ENCODE measurements at regions of chr14 and their contacts with region 1.

Region 1: GRCh38 chr14:92793709-92794546 is at the start of gene GOLGA5:
- H3K4me3 Mint-ChIP-seq: peak within 1 kb of the TSS; percentile 91
- H3K27ac Mint-ChIP-seq: peak within 1 kb of the TSS; percentile 98
- H3K4me1 Mint-ChIP-seq: peaks cover 54% of the 10 kb centered on the region
- H3K27me3 Mint-ChIP-seq: no peaks in the 10 kb centered on the region

Region 2: DNA sequence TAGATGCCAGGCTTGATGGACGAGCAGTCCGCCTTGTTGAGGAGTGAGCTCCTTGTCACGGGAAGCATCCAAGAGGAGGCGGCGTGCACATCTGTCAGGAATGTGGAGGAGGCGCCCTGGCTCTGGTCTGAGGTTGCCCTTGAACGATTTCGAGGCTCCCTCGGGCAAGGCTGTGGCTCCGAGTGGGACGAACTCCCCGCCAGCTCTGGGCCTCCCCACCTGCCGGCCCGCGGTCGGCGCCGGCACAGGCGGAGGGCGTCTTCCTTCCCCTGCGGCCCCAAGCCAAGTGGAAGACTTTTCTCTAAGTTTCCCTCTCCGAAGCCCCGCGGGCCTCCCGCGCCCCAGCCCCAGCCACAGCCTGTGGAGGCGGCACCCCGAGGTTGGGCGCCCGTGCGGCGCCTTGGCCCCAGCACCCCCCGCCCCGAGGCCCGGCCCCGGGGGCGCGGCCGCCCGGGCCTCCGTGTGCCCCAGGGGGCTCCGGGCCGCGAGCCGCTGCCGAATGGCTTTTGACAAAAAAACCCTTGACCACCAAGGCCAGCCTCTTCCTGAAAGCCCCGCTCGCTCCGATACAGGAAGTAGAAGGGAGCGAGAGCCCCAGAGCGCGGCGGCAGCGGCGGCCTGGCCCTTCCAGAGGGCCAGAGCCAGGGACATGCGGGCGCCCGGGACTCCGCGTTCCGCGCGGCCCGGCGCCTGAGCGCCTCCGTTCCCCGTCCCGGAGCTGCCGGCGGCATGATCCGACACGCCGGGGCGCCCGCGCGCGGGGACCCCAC is 280.5 kb before region 1 on chr14 and contains the start of gene RIN3:
- intact Hi-C with region 1: loop called (anchors 10 kb)
- H3K4me3 Mint-ChIP-seq: peak within 1 kb of the TSS; percentile 86
- H3K27ac Mint-ChIP-seq: peak within 1 kb of the TSS; percentile 94
- H3K4me1 Mint-ChIP-seq: peaks cover 67% of the 10 kb centered on the region
- H3K27me3 Mint-ChIP-seq: peaks cover 13% of the 10 kb centered on the region

Region 3: DNA sequence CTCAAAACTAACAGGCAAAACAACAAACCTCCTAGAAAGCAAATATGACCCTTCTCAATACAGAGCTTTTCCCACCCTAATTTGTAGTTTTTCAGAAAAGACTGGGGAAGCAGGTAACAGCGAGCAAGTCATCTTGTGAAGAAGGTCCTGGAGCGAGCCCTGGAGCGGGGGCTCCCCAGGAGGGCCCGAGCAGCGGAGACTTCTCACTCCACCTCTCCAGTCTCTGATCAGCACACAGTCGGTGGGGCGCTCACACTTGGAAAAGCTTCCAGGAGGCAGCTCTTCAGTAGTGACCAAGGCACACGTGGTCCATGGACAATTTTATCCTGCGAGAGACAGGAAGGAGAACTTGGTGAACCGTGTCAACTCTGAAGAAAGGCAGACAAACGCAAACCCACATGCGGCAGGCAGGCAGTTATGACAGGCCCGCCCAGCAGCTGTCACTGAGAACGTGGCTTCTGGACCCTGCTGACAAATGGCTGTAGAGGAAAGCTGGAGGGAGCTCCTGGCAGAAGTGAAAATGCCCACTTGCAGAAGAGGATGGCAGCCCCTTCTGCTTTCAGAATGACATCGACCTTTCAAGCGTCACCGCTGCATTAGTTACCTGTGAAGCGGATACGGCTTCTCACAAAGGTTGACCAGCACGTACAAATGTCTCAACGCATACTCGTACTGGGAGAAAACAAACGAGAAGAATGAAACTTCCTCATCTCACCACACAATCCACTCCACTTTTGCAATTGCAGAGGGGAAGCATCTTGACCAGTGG is 89.7 kb before region 1 on chr14:
- intact Hi-C with region 1: loop called (anchors 5 kb)
- H3K4me3 Mint-ChIP-seq: peak overlapping the region; percentile 56
- H3K27ac Mint-ChIP-seq: peak overlapping the region; percentile 91
- H3K4me1 Mint-ChIP-seq: peaks cover 73% of the 10 kb centered on the region
- H3K27me3 Mint-ChIP-seq: no peaks in the 10 kb centered on the region

Region 4: DNA sequence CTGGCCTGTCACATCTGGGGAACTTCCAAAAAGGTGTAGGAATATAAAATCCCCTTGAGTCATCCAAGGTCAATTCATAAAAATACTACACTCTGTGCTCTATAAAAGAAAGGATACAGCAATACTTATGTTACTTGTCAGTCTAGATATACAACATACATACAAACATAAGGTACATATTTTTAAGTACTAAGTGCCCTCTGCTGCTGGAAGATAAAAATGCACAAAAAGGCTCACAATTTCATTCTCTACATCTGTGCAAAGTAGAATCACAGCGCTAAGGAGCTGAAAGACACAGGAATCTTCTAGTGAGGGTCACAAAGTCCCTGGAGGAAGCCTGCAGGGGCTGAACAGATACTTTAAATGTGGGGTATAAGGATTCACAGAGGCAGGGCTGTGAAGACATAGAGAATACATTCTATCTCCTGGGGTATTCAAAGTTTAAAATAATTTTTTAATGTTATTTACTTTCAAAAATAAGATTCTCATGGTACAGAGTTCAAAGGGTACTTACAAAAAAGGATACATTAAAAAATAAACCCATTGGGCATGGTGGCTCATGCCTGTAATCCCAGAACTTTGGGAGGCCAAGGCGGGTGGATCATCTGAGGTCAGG is 10.0 kb before region 1 on chr14:
- intact Hi-C with region 1: no loop called
- H3K4me3 Mint-ChIP-seq: no peak overlapping the region
- H3K27ac Mint-ChIP-seq: peak overlapping the region; percentile 60
- H3K4me1 Mint-ChIP-seq: peaks cover 53% of the 10 kb centered on the region
- H3K27me3 Mint-ChIP-seq: no peaks in the 10 kb centered on the region

Measured in dendritic cell treated with granulocyte-macrophage colony-stimulating factor and Interleukin-4, amounts not matched to agents 40 ng/mL and 50 ng/mL, for 4 days (primary cell).